Head of caudate nucleus (tissue), 42 donors: ENCODE measurements at regions of chr7 and their contacts with region 1.

Region 1: DNA sequence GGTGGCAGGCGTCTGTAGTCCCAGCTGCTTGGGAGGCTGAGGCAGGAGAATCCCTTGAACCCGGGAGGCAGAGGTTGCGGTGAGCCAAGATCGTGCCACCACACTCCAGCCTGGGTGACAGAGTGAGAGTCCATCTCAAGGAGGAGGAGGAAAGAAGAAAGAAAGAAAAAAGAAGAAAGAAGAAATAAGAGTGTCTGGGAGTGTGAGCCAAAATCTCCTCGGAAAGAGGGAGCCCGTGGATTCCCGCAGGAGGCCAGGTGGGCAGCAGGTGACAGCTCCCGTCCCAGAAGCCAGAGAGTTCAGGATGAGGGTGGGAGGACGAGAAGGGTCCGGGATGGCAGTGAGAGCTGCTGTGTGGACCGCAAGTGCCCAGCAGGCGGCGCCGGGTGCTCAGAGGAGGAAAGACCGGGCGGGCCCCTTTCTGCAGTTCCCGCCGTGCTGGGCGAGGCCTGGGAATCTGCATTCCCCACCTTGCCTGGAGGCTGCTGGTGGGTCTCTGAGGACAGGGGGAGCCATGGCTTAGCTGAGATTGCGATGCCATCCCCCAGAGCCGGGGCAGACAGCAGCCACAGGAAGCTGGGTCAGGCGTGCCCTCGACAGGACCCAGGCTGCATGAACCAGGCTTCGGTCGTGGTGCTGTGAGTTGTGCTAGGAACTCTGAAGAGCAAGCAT is 17.1 kb upstream of the AMZ1 start:
- DNase-seq: peak in 41 of 42 donors; percentile 58 to 88 (median 74)

Region 2: GRCh38 chr7:2709553-2710285 is 38.9 kb after region 1 on chr7:
- intact Hi-C with region 1: loop called (anchors 5 kb)
- DNase-seq: peak in 41 of 42 donors; percentile 38 to 88 (median 69)